Activated B cell treated with CpG ODN at 0.5 μM for 24 hours (primary cell): ENCODE measurements at regions of chr2 and their contacts with region 1.

Region 1: GRCh38 chr2:37271218-37272067 is 40.0 kb downstream of the NDUFAF7 start:
- DNase-seq: no peak
- ATAC-seq: no peak
- H3K4me3 Mint-ChIP-seq: no peak overlapping the region
- H3K27ac Mint-ChIP-seq: no peak overlapping the region
- H3K4me1 Mint-ChIP-seq: no peaks in the 10 kb centered on the region
- H3K27me3 Mint-ChIP-seq: no peaks in the 10 kb centered on the region
- CTCF ChIP-seq: no peak

Region 2: DNA sequence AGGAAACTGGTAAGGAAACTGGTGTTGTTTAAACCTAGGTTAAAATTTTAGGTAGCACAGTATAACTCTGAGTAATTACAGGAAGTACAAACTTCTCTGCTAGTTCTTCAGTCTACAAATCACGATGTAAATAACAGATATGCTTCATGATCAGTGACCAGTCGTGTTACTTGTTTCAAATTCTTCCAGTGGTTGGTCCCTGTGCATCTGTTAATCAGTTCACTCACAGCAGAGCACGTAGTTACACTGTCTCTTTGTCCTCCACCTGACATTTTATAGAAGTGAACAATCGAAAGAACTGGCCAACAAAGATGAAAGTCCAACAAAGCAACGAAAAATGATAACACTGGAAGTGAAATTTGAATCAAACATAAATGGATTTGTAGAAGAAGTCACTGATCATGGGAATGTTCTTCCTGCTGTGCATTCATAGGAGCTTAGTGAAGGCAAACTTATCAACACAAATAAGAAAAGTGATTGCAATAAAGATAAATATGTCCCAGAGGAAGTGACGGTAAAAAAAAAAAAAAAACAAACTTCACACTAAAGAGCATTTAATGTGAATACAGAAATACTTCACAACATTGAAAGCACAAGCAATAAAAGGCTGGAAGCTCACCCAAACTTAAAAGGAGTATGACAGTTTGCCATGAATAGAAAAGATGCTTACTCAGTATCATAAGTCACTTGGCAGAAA is 121.7 kb before region 1 on chr2:
- CTCF ChIA-PET with region 1: no interaction called
- POLR2A ChIA-PET with region 1: no interaction called
- intact Hi-C with region 1: no loop called
- DNase-seq: no peak
- ATAC-seq: peak; percentile 37
- H3K4me3 Mint-ChIP-seq: no peak overlapping the region
- H3K27ac Mint-ChIP-seq: no peak overlapping the region
- H3K4me1 Mint-ChIP-seq: peaks cover 31% of the 10 kb centered on the region
- H3K27me3 Mint-ChIP-seq: no peaks in the 10 kb centered on the region
- CTCF ChIP-seq: no peak

Region 3: DNA sequence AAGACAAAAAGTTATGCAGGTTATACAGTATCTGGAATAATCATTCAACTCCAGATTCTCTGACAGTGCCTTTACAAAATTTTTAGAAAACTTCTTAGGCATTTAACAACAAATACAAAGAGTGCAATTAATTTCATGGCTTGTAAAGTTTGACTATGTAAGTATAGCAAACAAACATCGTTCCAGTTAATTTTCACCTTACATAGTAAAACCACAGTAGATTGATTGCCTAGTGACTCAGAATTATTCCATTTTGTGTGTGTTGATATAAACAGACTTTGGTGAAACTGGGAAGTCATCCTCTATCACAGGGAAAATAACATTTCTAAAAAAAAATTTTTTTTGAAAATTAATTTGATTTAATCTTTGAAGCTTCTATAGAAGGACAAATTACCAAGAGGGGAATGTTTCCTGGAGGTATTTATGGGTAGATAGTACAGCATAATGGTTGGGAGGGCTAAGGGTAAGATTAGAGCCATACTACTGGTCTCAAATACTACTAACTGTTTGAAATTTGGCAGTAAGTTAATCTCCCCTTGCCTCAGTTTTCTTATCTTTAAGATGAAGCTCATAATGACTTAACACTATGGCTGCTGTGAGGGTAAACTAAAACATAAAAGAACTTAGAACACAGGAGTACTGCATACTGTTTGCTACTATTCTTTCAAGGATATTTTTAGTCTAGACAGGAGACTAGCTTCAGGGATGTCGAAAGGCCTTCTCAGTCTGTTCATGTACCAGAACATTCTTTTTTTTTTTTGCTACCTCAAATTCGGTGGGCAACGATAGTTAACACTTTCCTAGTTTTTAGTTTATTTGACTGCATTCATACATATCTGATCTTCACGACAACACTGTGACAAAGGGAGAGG is 20.3 kb before region 1 on chr2:
- CTCF ChIA-PET with region 1: no interaction called
- POLR2A ChIA-PET with region 1: no interaction called
- intact Hi-C with region 1: loop called (anchors 2 kb)
- DNase-seq: no peak
- ATAC-seq: no peak
- H3K4me3 Mint-ChIP-seq: no peak overlapping the region
- H3K27ac Mint-ChIP-seq: no peak overlapping the region
- H3K4me1 Mint-ChIP-seq: no peaks in the 10 kb centered on the region
- H3K27me3 Mint-ChIP-seq: no peaks in the 10 kb centered on the region
- CTCF ChIP-seq: no peak

Region 4: DNA sequence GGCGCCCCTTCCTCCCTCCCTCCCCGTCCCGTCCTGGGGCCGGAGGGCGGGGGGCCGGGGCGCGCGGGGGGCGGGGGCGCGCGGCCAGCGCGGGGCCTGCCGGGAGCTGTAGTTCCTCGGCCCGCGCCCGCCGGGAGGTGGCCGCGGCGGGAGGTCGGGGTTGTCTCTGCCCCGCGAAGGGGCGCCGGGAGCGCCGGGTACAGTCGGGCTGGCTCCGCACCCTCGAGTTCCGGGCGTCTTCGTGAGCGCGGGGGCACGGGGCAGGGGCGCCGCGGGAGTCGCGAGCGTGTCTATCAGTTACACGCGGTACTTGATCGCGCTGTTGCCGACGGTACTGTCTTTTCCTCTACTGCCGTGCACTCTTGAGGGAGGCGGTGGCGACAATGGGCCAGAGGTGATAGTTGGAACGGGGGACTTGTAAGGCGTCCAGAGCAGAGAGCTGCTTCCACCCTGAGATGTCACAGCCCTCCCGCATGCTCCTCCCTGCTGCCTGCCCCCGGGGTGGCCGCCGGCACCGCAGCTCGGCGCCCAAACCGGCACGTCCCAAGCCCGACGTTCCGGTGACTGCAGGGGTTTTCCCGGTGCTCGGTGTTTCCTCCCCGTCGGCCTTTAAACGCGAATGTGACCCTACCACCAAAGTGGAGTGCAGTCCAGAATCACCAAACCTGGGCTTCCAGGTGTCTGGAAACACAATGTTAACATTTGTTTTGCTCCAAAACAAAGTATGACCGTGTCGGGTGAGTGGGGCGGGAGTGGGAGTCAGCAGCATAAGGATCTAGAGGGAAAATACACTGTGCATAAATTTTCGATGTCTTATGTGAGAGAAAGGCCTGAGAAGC is 53.6 kb after region 1 on chr2 and contains the start of gene PRKD3:
- CTCF ChIA-PET with region 1: no interaction called
- POLR2A ChIA-PET with region 1: no interaction called
- intact Hi-C with region 1: no loop called
- DNase-seq: peak; percentile 73
- ATAC-seq: peak; percentile 83
- H3K4me3 Mint-ChIP-seq: peak within 1 kb of the TSS; percentile 97
- H3K27ac Mint-ChIP-seq: peak within 1 kb of the TSS; percentile 96
- H3K4me1 Mint-ChIP-seq: peaks cover 38% of the 10 kb centered on the region
- H3K27me3 Mint-ChIP-seq: no peaks in the 10 kb centered on the region
- CTCF ChIP-seq: no peak
- total RNA-seq, gene PRKD3: 73.0 and 82.5 TPM in 2 replicates